Activated B cell treated with CpG ODN at 0.5 μM for 24 hours (primary cell): ENCODE measurements at regions of chr13 and their contacts with region 1.

Region 1: GRCh38 chr13:113208424-113209335 is at the start of gene PCID2:
- DNase-seq: peak; percentile 99
- ATAC-seq: peak; percentile 73
- H3K4me3 Mint-ChIP-seq: peak within 1 kb of the TSS; percentile 89
- H3K27ac Mint-ChIP-seq: peak within 1 kb of the TSS; percentile 79
- H3K4me1 Mint-ChIP-seq: peaks cover 56% of the 10 kb centered on the region
- H3K27me3 Mint-ChIP-seq: no peaks in the 10 kb centered on the region
- CTCF ChIP-seq: no peak
- total RNA-seq, gene PCID2: 35.6 and 43.1 TPM in 2 replicates

Region 2: DNA sequence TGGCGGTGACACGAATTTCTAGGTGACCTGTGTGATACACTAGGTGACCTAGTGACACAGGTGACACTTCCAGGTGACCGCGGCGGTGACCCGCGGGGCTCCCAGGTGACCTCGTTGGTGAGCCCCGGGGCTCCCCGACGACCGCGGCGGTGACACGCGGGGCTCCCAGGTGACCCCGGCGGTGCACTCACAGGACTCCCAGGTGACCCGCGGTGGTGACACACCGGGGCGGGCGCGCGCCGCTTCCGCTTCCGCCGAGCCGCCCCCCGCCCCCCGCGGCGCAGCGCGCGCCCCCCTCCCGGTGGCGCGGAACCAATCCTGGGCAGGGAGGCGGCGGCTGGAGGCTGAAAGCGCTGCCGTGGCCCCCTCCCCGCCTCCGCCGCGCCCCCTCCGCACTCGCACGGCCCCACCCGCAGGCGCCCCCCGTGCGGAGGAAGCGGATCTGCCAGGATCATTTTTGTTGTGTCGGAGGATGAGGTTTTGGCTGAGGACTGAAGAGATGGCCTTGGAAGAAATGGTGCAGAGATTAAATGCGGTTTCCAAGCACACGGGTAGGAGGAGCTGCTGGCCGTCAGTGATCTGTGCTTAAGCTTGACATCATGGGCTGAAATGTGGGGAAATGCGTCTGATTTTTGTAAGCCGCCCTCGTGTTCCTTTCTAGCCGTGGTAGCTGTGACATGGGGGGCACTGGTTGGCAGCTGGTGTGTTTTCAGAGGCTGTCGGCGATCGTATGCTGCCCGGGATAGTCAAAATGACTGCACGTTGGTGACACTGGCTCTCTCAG is 239.6 kb before region 1 on chr13 and contains the start of gene MCF2L:
- CTCF ChIA-PET with region 1: no interaction called
- POLR2A ChIA-PET with region 1: no interaction called
- intact Hi-C with region 1: loop called (anchors 2 kb)
- DNase-seq: peak; percentile 52
- ATAC-seq: peak; percentile 63
- H3K4me3 Mint-ChIP-seq: peak within 1 kb of the TSS; percentile 88
- H3K27ac Mint-ChIP-seq: peak within 1 kb of the TSS; percentile 47
- H3K4me1 Mint-ChIP-seq: peaks cover 11% of the 10 kb centered on the region
- H3K27me3 Mint-ChIP-seq: peaks cover 26% of the 10 kb centered on the region
- CTCF ChIP-seq: no peak
- total RNA-seq, gene MCF2L: 2.1 and 3.4 TPM in 2 replicates

Region 3: DNA sequence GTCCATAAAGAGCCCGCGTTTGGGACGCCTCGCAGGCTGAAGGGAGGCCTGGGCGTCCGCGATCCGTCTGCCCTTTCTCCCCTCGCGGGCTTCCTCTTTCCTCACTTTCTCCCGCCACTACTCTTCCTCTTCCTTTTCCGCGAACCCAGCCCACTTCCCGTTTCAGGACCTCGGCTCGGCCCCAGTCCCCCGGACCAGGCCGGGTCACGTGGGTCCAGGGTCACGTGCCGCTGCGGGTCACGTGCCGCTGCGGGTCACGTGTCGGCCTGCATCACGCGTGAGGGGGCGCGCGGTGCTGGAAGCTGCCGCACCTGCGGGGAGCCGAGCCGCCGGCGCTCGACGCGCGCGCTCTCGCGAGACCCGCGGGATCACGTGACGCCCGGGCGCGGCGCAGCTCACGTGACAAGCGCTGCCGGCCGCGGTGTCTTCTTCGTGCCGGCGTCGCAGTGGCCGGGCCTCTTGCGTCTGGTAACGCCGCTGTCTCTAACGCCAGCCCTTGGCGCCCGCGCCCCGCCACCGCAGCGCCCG is 88.2 kb after region 1 on chr13 and contains the start of gene LAMP1:
- CTCF ChIA-PET with region 1: interaction called, 5 read pairs
- POLR2A ChIA-PET with region 1: interaction called, 40 read pairs
- intact Hi-C with region 1: loop called (anchors 1 kb)
- DNase-seq: peak; percentile 100
- ATAC-seq: peak; percentile 80
- H3K4me3 Mint-ChIP-seq: peak within 1 kb of the TSS; percentile 94
- H3K27ac Mint-ChIP-seq: peak within 1 kb of the TSS; percentile 98
- H3K4me1 Mint-ChIP-seq: peaks cover 45% of the 10 kb centered on the region
- H3K27me3 Mint-ChIP-seq: peaks cover 16% of the 10 kb centered on the region
- CTCF ChIP-seq: no peak
- total RNA-seq, gene LAMP1: 83.7 and 86.2 TPM in 2 replicates

Region 4: GRCh38 chr13:113452942-113453901 is 244.5 kb after region 1 on chr13 and contains the start of gene ADPRHL1:
- CTCF ChIA-PET with region 1: no interaction called
- POLR2A ChIA-PET with region 1: no interaction called
- intact Hi-C with region 1: loop called (anchors 5 kb)
- DNase-seq: no peak
- ATAC-seq: no peak
- H3K4me3 Mint-ChIP-seq: no peak within 1 kb of the TSS
- H3K27ac Mint-ChIP-seq: no peak within 1 kb of the TSS
- H3K4me1 Mint-ChIP-seq: peaks cover 7% of the 10 kb centered on the region
- H3K27me3 Mint-ChIP-seq: no peaks in the 10 kb centered on the region
- CTCF ChIP-seq: no peak
- total RNA-seq, gene ADPRHL1: 0.84 and 0.93 TPM in 2 replicates